PC-9 (cell line): ENCODE measurements at regions of chr5 and their contacts with region 1.

Region 1: DNA sequence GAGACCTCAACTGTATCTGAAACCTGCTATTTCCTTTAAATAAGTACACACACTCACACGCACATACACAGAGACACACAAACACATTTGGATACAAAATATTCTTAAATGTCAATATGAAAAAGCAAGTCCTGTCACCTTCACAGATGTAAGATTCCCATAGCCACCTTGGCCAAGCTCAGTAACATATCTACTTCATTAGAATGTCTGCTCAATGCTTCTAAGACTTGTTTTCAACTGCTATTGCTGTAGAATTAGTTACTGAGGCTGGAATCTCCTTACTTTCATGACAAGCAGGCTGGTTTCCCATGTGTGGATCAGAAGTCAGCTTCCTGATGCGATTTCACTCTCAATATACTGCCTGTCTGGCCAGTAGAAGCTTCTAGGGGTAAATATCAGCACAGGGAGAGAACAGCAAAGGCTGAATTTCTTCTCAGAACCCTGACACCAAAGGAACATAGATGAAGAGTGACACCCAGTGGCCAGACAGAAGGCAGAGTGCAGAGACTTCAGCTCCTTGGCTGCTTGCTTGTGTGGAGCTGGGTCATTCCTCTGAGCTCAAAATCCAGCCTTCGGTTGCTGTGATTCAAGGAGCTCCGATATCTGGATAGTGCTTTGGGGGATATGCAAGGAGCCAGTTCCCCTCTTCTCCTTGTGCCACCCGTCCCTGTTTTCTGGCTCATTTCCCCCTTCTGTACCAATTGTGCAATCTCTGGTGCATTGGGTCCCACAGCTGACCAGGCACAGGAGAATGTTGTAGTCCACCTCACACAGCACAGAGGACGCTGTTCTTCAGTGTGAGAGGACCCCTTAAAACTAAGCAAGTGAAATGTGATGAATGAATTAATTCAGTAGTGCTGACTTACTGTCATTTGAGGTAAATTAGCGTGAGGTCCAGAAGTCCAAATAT is 26.6 kb upstream of the ABLIM3 start:
- DNase-seq: peak; percentile 74 to 82
- H3K4me3 ChIP-seq: peak overlapping the region; percentile 22; the same call in 1 of the 2 replicates
- H3K27ac ChIP-seq: peak overlapping the region; percentile 92
- H3K4me1 ChIP-seq: peaks cover 66% of the 10 kb centered on the region
- H3K27me3 ChIP-seq: no peaks in the 10 kb centered on the region
- CTCF ChIP-seq: peak; percentile 90

Region 2: DNA sequence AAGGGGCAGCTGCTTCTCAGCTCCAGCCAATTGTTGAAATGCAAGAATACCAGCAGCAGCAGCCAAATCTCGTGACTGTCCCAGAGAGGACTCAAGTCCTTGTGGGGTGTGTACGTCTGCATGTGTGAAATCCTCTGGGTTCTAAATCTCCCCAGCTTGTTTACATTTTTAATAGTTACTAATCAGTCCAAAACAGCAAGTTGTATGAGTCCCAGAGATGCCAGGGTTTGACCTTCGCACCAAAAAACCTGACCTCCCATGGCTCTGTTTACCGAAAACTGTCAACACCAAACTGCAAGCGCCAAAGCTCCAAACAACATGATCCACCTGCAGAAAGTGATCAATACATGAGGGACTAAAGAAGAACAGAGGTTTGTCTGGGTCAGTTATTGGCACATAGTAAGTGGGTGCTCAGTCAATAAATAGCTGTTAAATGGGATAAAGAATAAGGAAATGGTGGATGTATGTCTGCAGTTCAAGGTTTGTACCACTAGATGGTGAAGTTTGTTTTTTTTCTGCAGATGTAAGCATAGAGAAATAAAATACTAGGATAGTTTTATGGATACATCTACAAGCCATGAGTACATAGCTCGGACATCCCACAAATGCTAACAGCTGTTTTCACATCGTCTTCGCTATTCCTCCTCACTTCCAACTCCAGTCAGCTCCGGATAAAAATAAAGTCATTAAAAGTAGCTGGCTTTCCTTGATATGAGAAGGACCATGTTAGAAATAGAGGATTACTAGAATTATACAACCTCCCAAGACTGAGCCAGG is 373.5 kb before region 1 on chr5:
- CTCF ChIA-PET with region 1: interaction called, 18 read pairs
- POLR2A ChIA-PET with region 1: interaction called, 5 read pairs
- intact Hi-C with region 1: no loop called
- DNase-seq: peak in 1 of 2 experiments; percentile 65
- H3K4me3 ChIP-seq: no peak overlapping the region
- H3K27ac ChIP-seq: no peak overlapping the region
- H3K4me1 ChIP-seq: peaks cover 14% of the 10 kb centered on the region
- H3K27me3 ChIP-seq: no peaks in the 10 kb centered on the region
- CTCF ChIP-seq: peak; percentile 93

Region 3: GRCh38 chr5:148928141-148928540 is 186.5 kb before region 1 on chr5:
- CTCF ChIA-PET with region 1: interaction called, 11 read pairs
- POLR2A ChIA-PET with region 1: no interaction called
- intact Hi-C with region 1: no loop called
- DNase-seq: no peak
- H3K4me3 ChIP-seq: no peak overlapping the region
- H3K27ac ChIP-seq: no peak overlapping the region
- H3K4me1 ChIP-seq: peaks cover 24% of the 10 kb centered on the region
- H3K27me3 ChIP-seq: no peaks in the 10 kb centered on the region
- CTCF ChIP-seq: no peak

Region 4: DNA sequence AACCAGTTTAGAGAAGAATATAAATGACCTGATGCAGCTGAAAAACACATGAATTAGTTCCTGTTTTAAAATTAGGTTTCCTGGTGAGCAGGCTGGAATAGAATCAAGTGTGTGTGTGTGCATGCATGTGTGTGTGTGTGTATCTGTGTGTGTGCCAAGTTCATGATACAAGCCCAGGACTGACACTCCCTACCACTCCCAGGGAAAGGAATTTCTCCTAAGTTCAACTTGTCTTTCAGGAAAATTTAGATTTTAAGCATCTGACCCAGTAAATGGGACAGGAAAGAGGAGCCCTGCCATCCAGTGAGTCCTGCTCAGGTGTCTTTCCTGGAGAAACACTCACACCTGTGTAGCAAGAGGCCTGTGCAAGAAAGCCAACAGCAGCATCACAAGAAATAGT is 40.6 kb before region 1 on chr5:
- CTCF ChIA-PET with region 1: interaction called, 3 read pairs
- POLR2A ChIA-PET with region 1: no interaction called
- intact Hi-C with region 1: loop called (anchors 1 kb)
- DNase-seq: peak; percentile 57 to 76
- H3K4me3 ChIP-seq: no peak overlapping the region
- H3K27ac ChIP-seq: peak overlapping the region; percentile 79
- H3K4me1 ChIP-seq: peaks cover 47% of the 10 kb centered on the region
- H3K27me3 ChIP-seq: no peaks in the 10 kb centered on the region
- CTCF ChIP-seq: no peak